ENCODE measurements at regions of chr18 and their contacts with region 1.

Region 1: GRCh38 chr18:31954349-31954748 is 11.4 kb upstream of the TRAPPC8 start:
- DNase-seq: no peak
- ATAC-seq: no peak
- H3K4me3 Mint-ChIP-seq: no peak overlapping the region
- H3K27ac Mint-ChIP-seq: no peak overlapping the region
- H3K4me1 Mint-ChIP-seq: peaks cover 2% of the 10 kb centered on the region
- H3K27me3 Mint-ChIP-seq: no peaks in the 10 kb centered on the region

Region 2: GRCh38 chr18:31555971-31556747 is 398.2 kb before region 1 on chr18:
- CTCF ChIA-PET with region 1: no interaction called
- POLR2A ChIA-PET with region 1: no interaction called
- intact Hi-C with region 1: loop called (anchors 1 to 2 kb)
- DNase-seq: peak; percentile 56
- ATAC-seq: peak; percentile 61
- H3K4me3 Mint-ChIP-seq: no peak overlapping the region
- H3K27ac Mint-ChIP-seq: no peak overlapping the region
- H3K4me1 Mint-ChIP-seq: peaks cover 2% of the 10 kb centered on the region
- H3K27me3 Mint-ChIP-seq: peaks cover 5% of the 10 kb centered on the region

Region 3: DNA sequence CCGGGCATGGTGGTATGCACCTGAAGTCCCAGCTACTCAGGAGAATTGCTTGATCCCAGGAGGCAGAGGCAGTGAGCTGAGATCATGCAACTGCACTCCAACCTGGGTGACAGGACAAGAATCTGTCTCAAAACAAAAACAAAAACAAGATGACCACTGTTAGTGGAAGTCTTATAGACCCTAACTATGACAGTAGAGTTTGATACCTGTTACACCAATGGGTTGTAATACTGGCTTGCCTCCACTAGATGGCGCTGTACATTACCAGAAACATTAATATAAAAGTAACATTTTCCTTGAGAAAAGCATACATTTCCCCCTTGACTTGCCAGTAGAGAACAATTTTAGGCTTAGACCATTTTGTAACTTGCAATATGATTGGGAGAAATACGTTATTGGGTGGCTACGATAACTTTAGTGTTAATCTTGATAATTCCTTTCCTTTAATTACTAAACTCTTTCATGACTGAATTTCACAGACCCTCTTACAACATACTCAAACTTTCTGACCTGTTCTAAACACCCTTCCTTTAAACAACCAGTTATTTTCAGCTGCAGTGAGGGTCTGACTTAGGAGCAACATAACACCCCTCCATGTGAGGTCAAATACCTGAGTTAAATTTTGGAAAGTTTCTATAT is 213.1 kb before region 1 on chr18:
- CTCF ChIA-PET with region 1: no interaction called
- POLR2A ChIA-PET with region 1: no interaction called
- intact Hi-C with region 1: loop called (anchors 1 kb)
- DNase-seq: peak; percentile 73
- ATAC-seq: no peak
- H3K4me3 Mint-ChIP-seq: no peak overlapping the region
- H3K27ac Mint-ChIP-seq: no peak overlapping the region
- H3K4me1 Mint-ChIP-seq: no peaks in the 10 kb centered on the region
- H3K27me3 Mint-ChIP-seq: no peaks in the 10 kb centered on the region

Region 4: DNA sequence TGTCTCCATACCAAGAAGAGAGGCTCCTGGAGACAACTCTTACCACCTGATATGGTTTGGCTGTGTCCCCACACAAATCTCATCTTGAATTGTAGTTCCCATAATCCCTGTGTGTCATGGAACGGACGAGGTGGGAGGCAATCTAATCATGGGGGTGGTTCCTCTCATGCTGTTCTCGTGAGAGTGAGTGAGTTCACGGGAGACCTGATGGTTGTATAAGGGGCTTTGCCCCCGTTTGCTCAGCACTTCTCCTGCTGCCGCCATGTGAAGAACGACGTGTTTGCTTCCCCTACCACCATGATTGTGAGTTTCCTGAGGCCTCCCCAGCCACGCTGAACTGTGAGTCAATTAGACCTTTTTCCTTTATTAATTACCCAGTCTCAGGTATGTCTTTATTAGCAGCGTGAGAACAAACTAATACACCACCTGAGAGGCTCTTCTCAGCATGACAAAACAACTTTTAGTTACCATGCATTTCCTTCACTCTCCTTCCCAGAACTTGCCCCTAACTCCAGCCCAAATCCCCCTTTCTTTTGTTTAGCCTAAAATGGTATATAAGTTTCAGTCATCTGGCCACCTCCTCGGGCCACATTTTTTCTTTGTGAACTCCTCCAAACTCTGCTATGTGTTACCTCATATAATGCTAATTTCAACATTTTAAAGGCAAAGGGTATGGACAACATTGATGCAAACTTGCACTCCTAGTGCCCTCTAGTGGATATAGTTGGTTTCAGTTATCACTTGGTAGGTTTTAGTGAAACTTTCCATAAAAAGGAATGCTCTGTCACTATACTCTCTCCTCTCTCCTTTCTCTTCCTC is 135.0 kb before region 1 on chr18:
- CTCF ChIA-PET with region 1: no interaction called
- POLR2A ChIA-PET with region 1: no interaction called
- intact Hi-C with region 1: loop called in 1 of 2 experiments (anchors 1 kb)
- DNase-seq: no peak
- ATAC-seq: peak; percentile 63
- H3K4me3 Mint-ChIP-seq: no peak overlapping the region
- H3K27ac Mint-ChIP-seq: no peak overlapping the region
- H3K4me1 Mint-ChIP-seq: no peaks in the 10 kb centered on the region
- H3K27me3 Mint-ChIP-seq: peaks cover 2% of the 10 kb centered on the region

Region 5: GRCh38 chr18:31860488-31860887 is 93.9 kb before region 1 on chr18:
- CTCF ChIA-PET with region 1: interaction called, 3 read pairs
- POLR2A ChIA-PET with region 1: no interaction called
- intact Hi-C with region 1: loop called in 1 of 2 experiments (anchors 5 kb)
- DNase-seq: no peak
- ATAC-seq: no peak
- H3K4me3 Mint-ChIP-seq: no peak overlapping the region
- H3K27ac Mint-ChIP-seq: no peak overlapping the region
- H3K4me1 Mint-ChIP-seq: peaks cover 2% of the 10 kb centered on the region
- H3K27me3 Mint-ChIP-seq: no peaks in the 10 kb centered on the region

Region 6: GRCh38 chr18:31990823-31991222 is 36.5 kb after region 1 on chr18:
- CTCF ChIA-PET with region 1: no interaction called
- POLR2A ChIA-PET with region 1: no interaction called
- intact Hi-C with region 1: loop called in 1 of 2 experiments (anchors 5 kb)
- DNase-seq: no peak
- ATAC-seq: no peak
- H3K4me3 Mint-ChIP-seq: no peak overlapping the region
- H3K27ac Mint-ChIP-seq: no peak overlapping the region
- H3K4me1 Mint-ChIP-seq: no peaks in the 10 kb centered on the region
- H3K27me3 Mint-ChIP-seq: no peaks in the 10 kb centered on the region

Region 7: DNA sequence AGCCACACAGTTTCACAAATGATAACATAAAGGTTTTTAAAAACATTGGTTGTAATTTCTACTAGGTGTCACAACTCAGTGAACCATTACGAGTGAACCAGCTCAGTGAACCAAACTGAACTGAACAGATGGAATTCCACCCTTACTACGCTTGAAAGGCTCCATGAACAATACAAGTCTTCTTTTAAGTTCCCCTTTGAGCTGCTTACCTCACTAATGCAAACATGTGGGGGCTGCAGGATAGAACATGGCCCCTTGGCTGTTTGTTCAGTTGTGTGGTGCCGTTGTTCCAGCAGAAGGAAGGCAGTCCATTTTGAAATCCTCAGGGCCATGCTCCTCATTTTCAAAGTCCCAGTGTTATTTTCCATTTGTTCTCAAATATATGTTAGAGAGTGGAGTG is 849.2 kb after region 1 on chr18:
- CTCF ChIA-PET with region 1: no interaction called
- POLR2A ChIA-PET with region 1: no interaction called
- intact Hi-C with region 1: no loop called
- DNase-seq: no peak
- ATAC-seq: no peak
- H3K4me3 Mint-ChIP-seq: no peak overlapping the region
- H3K27ac Mint-ChIP-seq: no peak overlapping the region
- H3K4me1 Mint-ChIP-seq: no peaks in the 10 kb centered on the region
- H3K27me3 Mint-ChIP-seq: no peaks in the 10 kb centered on the region